Mammary epithelial cell (primary cell): ENCODE measurements at regions of chr3 and their contacts with region 1.

Region 1: DNA sequence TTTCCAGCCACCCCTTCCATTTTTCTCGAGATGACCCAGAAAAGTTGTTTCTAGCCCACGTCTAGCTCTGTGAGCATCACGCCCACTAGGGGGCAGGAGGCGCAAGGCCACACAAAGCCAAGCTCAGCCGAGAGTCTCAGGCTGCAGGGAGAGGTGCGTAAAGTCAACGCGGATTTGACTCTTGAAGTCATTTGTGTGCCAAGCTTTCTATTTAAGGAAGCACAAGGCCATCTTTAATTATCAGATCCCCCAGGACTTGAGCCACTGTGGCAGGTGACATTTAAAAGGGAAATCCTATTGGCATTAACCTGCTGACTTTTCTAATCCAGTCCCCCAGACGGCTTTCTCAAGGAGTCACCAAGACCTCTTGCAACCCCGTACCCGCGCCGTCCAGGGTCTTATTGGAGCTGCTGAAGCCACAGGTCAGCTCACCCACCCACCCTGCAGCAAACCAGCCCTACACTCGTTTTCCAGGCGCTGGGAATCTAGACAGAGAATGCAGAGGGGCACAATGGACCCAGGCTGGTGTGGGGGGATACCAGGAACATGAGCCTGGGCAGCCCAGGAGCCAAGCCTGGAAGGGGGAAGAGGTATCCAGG is 62.1 kb downstream of the CAPN7 start:
- DNase-seq: peak; percentile 60
- H3K4me3 ChIP-seq: no peak overlapping the region
- H3K27ac ChIP-seq: no peak overlapping the region
- H3K4me1 ChIP-seq: peaks cover 20% of the 10 kb centered on the region
- H3K27me3 ChIP-seq: no peaks in the 10 kb centered on the region
- CTCF ChIP-seq: peak; percentile 94 to 97

Region 2: DNA sequence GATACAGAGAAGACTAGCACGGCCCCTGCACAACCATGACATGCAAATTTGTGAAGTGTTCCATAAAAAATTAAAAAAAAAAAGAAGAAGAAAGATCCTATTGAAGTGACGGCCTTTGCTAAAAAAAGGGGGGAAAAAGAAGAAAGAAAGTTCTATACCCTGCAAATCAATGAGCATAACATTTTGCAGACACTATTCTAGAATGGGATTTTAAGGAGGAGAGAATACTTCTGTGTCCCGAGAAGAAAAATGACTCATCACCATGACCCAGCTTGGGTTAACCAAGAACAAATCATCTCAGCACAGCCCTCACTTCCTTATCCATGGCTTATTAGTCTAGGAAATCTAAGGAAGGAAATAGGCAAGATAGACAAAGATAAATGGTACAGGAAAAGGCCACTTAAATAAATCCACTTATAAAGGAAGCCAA is 71.7 kb after region 1 on chr3:
- CTCF ChIA-PET with region 1: no interaction called
- dilution Hi-C with region 1: loop called (anchors 5 kb)
- in situ Hi-C with region 1: no loop called
- intact Hi-C with region 1: no loop called
- DNase-seq: peak; percentile 58
- H3K4me3 ChIP-seq: no peak overlapping the region
- H3K27ac ChIP-seq: no peak overlapping the region
- H3K4me1 ChIP-seq: peaks cover 6% of the 10 kb centered on the region
- H3K27me3 ChIP-seq: no peaks in the 10 kb centered on the region
- CTCF ChIP-seq: no peak

Region 3: DNA sequence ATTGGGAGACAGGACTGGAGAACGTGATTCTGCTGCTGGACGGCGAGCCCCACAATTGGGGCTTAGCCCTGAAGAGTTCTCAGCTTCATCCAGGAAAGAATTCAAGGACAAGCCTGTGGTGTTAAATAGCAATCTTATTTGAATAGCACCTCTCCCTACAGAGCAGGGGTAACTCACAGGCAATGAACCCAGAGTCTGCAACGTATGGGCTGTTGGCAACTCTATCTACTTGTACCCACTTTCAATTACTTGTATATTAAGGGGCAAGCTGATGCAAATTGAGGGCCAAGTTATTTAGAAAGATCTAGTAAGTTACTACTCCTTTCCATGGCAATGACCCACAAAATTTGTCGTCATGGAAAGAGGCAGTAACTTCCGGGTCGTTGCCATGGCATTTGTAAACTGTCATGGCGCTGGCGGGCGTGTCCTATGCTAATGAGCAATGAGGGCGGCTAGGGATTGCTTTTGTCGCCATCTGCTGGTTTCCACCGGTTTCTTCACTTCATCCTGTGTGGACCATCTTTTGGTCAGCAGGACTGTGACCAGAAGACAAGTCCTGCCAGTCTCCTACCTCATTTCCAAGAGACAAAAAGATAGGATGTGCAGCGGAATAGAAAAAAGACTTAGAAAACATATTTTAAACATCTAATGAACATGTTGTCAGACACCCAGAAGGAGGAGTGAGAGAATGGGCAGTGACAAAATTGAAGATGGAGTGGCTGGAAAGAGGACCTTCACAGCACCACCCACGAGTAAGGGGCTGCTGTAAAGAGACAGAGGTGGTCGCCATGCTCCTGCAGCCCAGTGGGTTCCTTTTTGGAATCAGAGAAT is 110.0 kb after region 1 on chr3:
- CTCF ChIA-PET with region 1: no interaction called
- dilution Hi-C with region 1: loop called (anchors 5 kb)
- in situ Hi-C with region 1: loop called (anchors 5 kb)
- intact Hi-C with region 1: loop called (anchors 1 kb)
- DNase-seq: peak; percentile 85
- H3K4me3 ChIP-seq: no peak overlapping the region
- H3K27ac ChIP-seq: peak overlapping the region; percentile 85
- H3K4me1 ChIP-seq: no peaks in the 10 kb centered on the region
- H3K27me3 ChIP-seq: no peaks in the 10 kb centered on the region
- CTCF ChIP-seq: peak; percentile 91 to 92

Region 4: DNA sequence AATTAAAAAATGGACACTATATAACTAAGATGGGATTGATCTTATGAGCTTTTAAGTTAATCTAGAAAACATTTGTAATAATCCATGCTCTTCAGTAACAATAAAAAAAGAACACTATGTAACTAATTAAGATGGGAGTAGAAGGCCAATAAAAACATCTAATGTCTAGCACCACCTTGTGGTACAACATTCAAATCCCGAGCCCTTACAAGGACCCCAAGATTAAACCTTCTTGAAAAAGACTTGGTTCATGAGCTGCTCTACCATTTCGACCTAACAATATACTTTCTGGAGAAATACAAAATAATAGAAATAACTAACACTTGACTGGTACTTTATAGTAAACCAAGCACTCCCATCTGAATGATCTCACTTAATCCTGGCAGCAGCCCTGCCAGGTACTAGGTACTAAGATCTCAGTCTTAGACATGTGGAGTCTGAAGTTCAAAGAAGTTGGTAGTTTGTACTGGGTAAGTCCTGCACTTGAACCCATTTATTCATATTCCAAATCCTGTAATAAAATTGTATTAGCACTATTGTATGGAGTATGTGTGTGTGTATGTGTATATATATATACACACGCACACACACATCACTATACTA is 137.4 kb after region 1 on chr3:
- CTCF ChIA-PET with region 1: interaction called, 4 read pairs
- dilution Hi-C with region 1: no loop called
- in situ Hi-C with region 1: no loop called
- intact Hi-C with region 1: loop called (anchors 1 kb)
- DNase-seq: peak; percentile 38
- H3K4me3 ChIP-seq: no peak overlapping the region
- H3K27ac ChIP-seq: no peak overlapping the region
- H3K4me1 ChIP-seq: no peaks in the 10 kb centered on the region
- H3K27me3 ChIP-seq: no peaks in the 10 kb centered on the region
- CTCF ChIP-seq: peak; percentile 58 to 61

Region 5: DNA sequence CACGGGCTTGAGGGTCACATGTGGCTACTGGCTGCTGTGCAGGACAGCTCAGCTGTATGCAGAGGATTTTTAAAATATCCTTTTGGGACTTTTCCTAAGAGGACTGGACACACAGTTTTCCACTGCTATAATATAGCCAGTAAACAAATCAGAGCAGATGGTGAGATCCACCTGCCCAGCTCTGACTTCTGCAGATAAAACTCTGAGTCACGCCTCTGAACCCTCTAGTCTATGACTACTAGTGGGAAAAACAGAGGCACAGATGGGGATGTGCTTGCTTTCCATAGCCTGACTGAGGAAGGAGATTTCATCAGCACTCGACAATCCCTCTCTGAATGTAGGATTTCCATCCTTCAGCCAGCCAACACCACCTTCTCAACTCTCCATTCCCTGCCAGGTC is 208.2 kb after region 1 on chr3:
- CTCF ChIA-PET with region 1: no interaction called
- dilution Hi-C with region 1: no loop called
- in situ Hi-C with region 1: no loop called
- intact Hi-C with region 1: no loop called
- DNase-seq: no peak
- H3K4me3 ChIP-seq: no peak overlapping the region
- H3K27ac ChIP-seq: no peak overlapping the region
- H3K4me1 ChIP-seq: no peaks in the 10 kb centered on the region
- H3K27me3 ChIP-seq: peaks cover 2% of the 10 kb centered on the region
- CTCF ChIP-seq: no peak

Region 6: DNA sequence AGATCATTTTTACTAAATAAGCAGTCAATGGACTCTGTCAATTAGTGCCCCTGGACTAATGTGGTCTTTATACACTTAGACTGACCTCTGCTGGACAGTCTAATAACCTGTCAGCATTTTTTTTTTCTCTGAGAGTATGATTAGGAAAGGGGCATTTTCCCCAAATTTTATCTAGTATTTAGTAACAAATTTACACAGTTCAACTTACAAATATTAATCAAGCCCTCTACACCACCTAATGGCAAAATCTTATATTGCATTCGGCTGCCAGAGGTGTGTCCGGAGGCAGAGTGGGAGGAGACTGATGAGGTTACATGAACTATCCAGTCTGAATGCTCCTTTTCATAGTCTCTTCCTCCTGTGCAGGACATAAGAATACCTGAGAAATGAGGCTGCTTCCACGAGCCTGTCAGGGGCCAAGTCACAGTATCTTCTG is 289.4 kb after region 1 on chr3:
- CTCF ChIA-PET with region 1: no interaction called
- dilution Hi-C with region 1: no loop called
- in situ Hi-C with region 1: loop called in 1 of 2 experiments (anchors 25 kb)
- intact Hi-C with region 1: loop called (anchors 1 kb)
- DNase-seq: peak; percentile 77
- H3K4me3 ChIP-seq: no peak overlapping the region
- H3K27ac ChIP-seq: no peak overlapping the region
- H3K4me1 ChIP-seq: no peaks in the 10 kb centered on the region
- H3K27me3 ChIP-seq: no peaks in the 10 kb centered on the region
- CTCF ChIP-seq: peak; percentile 29 to 40